ENCODE measurements at regions of chr17 and their contacts with region 1.

Region 1: DNA sequence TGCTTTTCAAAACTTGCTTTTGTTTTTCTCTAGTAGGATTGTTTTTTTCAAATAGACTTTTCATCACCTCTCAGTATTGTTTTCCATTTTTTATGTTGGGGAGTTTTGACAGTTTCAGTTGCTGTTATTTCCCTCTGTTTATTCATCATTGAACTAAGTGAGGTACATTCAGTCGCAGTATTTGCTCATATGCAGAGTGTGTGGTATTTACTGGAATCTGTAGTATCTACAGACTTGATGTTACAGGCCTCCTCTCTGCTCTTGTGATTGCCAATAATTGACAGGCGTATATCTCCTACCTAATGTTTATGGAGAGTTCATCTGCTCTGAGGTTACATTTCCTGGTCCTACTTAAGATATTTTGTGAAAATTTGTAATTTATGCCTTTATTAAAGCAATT is 49.6 kb downstream of the COX10 start:
- DNase-seq: no peak
- H3K4me3 Mint-ChIP-seq: peak overlapping the region; percentile 30
- H3K27ac Mint-ChIP-seq: peak overlapping the region; percentile 96
- H3K4me1 Mint-ChIP-seq: peaks cover 89% of the 10 kb centered on the region
- H3K27me3 Mint-ChIP-seq: no peaks in the 10 kb centered on the region

Region 2: GRCh38 chr17:14042411-14042810 is 76.5 kb before region 1 on chr17:
- CTCF ChIA-PET with region 1: no interaction called
- POLR2A ChIA-PET with region 1: no interaction called
- intact Hi-C with region 1: loop called (anchors 1 kb)
- DNase-seq: no peak
- H3K4me3 Mint-ChIP-seq: no peak overlapping the region
- H3K27ac Mint-ChIP-seq: no peak overlapping the region
- H3K4me1 Mint-ChIP-seq: peaks cover 42% of the 10 kb centered on the region
- H3K27me3 Mint-ChIP-seq: no peaks in the 10 kb centered on the region

Region 3: DNA sequence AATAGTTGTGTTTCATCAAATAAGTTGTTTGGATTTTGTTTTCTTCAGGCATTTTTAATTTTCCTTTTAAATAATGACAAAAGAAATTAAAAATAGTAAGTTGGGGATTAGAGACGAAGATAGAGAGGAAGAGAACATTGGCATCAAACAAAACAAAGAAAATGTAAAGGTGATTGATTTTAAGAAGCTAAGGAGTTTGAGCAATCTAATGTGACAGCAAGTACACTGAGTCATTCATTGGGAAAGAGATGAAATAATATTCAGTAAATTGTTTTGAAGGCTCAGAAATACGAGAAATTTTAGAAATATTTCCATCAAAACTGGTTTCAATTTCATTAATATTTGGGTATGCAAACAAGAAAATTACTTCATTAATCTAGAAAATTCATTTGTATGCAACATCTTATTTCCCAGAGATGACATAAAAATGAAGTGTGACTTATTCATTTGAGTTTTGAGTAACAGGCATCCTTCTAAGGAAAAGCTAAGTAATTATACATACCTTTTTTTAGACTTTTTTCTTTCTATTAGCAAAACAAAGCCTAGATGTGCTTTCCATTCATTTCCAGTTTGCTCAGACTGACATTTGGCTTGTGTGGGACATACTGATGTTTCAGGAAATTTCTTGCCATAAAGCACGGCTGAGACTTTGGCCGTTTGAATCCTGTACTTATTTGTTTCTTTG is 17.1 kb after region 1 on chr17:
- CTCF ChIA-PET with region 1: no interaction called
- POLR2A ChIA-PET with region 1: no interaction called
- intact Hi-C with region 1: loop called (anchors 1 kb)
- DNase-seq: no peak
- H3K4me3 Mint-ChIP-seq: no peak overlapping the region
- H3K27ac Mint-ChIP-seq: peak overlapping the region; percentile 64
- H3K4me1 Mint-ChIP-seq: peaks cover 18% of the 10 kb centered on the region
- H3K27me3 Mint-ChIP-seq: no peaks in the 10 kb centered on the region

Region 4: DNA sequence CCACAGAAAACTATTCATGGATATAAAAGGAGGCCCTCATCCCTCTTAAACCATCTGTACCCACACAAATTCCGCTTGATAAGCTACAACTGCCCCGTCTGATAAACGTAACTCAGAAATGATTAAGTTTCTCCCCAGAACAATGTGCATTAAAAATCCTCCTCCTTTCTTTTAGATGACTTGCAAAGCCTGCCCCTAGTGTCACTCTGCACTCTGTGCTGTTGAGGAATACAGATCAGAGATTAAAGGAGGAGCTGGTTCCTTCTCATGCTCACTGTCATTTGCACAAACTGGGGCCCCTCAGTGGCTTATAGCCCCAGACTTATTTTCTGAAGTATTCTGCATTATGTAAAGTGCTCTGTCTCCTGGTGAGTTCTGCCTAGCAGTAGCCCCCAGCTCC is 84.4 kb after region 1 on chr17:
- CTCF ChIA-PET with region 1: interaction called, 6 read pairs
- POLR2A ChIA-PET with region 1: no interaction called
- intact Hi-C with region 1: loop called (anchors 1 kb)
- DNase-seq: peak; percentile 60
- H3K4me3 Mint-ChIP-seq: no peak overlapping the region
- H3K27ac Mint-ChIP-seq: peak overlapping the region; percentile 77
- H3K4me1 Mint-ChIP-seq: peaks cover 85% of the 10 kb centered on the region
- H3K27me3 Mint-ChIP-seq: no peaks in the 10 kb centered on the region

Region 5: GRCh38 chr17:14427900-14428647 is 309.1 kb after region 1 on chr17:
- CTCF ChIA-PET with region 1: no interaction called
- POLR2A ChIA-PET with region 1: no interaction called
- intact Hi-C with region 1: loop called (anchors 10 kb)
- DNase-seq: peak; percentile 70
- H3K4me3 Mint-ChIP-seq: peak overlapping the region; percentile 67
- H3K27ac Mint-ChIP-seq: peak overlapping the region; percentile 90
- H3K4me1 Mint-ChIP-seq: peaks cover 57% of the 10 kb centered on the region
- H3K27me3 Mint-ChIP-seq: no peaks in the 10 kb centered on the region

Measured in activated CD4-positive, alpha-beta memory T cell treated with anti-CD3 and anti-CD28 coated beads for 36 hours (primary cell).